Activated T-helper 2 cell treated with anti-CD3 and anti-CD28 coated beads, Interferon-gamma antibody, Interleukin-2, Interleukin-4, amounts not matched to agents 10 μg/mL and 5 μg/mL and 100 μg/mL, durations not matched to agents 14 hours and 24 hours and 36 hours (primary cell): ENCODE measurements at regions of chr1 and their contacts with region 1.

Region 1: DNA sequence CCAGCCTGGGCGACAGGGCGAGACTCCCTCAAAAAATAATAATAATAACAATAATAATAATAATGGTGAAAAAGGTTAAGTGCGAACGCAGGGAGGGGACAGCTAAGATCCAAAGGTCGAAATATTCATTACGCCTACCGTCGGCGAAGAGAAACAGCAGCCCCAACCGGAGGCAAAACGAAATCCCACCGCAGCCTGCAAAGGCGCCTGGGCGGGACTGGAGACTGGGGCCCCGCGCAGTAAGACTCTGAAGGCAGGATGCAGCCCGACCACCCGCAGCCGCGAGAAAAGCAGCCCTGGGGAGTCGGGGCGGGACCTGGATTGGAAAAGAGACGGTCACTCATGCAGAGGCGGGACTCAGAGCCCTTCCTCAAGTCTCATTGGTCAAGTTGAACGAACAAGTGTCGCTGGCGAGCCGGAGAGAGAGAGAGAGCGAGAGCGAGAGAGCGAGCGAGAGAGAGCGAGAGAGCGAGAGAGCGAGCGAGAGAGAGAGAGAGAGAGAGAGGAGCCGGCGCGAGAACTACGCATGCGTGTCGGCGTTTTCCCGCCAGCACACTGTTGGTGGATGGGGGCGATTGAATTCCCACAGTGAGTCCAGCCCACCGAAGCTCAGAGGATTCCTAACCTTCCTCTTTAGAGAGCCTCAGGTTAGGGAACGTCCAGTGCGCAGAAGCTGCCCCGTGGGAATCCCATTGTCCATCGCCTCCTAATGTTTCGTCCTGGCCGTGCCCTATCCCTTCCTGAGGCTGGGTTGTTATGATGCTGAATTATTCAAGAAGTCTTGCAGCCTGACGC is 10.7 kb downstream of the ENTREP3 start:
- DNase-seq: peak; percentile 97
- H3K4me3 Mint-ChIP-seq: peak overlapping the region; percentile 77
- H3K27ac Mint-ChIP-seq: peak overlapping the region; percentile 87
- H3K4me1 Mint-ChIP-seq: peaks cover 32% of the 10 kb centered on the region
- H3K27me3 Mint-ChIP-seq: peaks cover 2% of the 10 kb centered on the region

Region 2: DNA sequence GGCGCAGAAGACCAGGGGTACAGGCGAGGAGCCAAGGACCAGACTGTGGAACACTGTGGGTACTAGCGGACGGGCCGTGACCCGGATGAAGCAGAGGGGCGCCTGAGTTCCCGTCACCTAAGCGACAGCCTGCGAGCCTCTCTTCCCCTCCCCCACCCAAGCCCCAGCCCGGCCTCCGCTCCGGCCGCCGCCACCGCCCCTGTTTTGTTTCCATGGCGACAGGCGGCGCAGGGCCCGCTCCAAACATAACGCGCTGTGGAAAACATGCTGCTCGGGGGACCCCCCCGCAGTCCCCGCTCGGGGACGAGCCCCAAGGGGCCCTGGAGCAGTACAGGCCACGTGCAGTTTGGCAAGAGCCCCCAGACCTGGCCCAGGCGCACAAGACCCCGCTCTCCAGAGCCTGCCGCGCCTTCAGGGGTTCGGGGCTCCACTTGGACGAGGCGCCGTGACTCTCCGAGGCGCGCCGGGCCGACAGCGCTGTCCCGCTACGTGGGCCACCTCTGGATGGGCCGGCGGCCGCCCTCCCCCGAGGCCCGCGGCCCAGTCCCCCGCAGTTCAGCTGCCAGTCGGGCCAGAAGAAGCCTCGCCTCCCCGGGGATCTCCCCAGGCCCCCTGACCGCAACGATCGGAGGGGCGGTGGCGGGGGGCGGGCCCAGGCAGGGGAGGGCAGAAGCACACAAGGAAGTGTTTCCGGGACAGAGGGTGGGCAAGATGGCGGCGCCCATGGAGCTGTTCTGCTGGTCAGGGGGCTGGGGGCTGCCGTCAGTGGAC is 35.8 kb before region 1 on chr1 and contains the start of gene MTX1:
- intact Hi-C with region 1: loop called (anchors 5 kb)
- DNase-seq: peak; percentile 84
- H3K4me3 Mint-ChIP-seq: peak within 1 kb of the TSS; percentile 92
- H3K27ac Mint-ChIP-seq: peak within 1 kb of the TSS; percentile 87
- H3K4me1 Mint-ChIP-seq: peaks cover 24% of the 10 kb centered on the region
- H3K27me3 Mint-ChIP-seq: no peaks in the 10 kb centered on the region
- total RNA-seq, gene MTX1: 58.6 and 64.0 TPM in 2 replicates

Region 3: DNA sequence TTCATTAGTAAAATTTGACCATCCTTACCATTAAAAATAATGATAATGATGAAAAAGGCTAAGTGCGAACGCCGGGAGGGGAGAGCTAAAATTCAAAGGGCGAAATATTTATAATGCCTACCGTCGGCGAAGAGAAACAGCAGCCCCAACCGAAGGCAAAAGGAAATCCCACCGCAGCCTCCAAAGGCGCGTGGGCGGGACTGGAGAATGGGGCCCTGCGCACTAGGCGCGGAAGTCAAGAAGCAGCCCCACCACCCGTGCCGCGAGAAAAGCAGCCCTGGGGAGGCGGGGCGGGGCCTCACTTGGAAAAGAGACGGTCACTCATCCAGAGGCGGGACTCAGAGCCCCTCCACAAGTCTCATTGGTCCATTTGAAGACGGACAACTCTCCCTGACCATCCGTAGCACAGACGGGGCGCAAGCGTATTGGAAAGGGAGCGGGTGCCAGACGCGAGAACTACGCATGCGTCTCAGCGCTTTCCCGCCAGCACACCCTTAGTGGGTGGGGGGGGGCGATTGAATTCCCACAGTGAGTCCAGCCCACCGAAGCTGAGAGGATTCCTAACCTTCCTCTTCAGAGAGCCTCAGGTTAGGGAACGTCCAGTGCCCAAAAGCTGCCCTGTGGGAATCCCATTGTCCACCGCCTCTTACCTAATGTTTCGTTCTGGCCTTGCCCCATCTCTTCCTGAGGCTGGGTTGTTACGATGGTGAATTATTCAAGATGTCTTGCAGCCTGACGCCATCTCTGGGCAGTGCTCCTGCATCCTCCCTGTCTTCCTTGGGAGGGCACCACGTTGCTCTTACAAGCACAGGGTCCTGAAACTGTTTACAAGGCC is 17.1 kb before region 1 on chr1:
- intact Hi-C with region 1: loop called (anchors 1 kb)
- DNase-seq: peak; percentile 99
- H3K4me3 Mint-ChIP-seq: peak overlapping the region; percentile 95
- H3K27ac Mint-ChIP-seq: peak overlapping the region; percentile 94
- H3K4me1 Mint-ChIP-seq: peaks cover 26% of the 10 kb centered on the region
- H3K27me3 Mint-ChIP-seq: no peaks in the 10 kb centered on the region

Region 4: DNA sequence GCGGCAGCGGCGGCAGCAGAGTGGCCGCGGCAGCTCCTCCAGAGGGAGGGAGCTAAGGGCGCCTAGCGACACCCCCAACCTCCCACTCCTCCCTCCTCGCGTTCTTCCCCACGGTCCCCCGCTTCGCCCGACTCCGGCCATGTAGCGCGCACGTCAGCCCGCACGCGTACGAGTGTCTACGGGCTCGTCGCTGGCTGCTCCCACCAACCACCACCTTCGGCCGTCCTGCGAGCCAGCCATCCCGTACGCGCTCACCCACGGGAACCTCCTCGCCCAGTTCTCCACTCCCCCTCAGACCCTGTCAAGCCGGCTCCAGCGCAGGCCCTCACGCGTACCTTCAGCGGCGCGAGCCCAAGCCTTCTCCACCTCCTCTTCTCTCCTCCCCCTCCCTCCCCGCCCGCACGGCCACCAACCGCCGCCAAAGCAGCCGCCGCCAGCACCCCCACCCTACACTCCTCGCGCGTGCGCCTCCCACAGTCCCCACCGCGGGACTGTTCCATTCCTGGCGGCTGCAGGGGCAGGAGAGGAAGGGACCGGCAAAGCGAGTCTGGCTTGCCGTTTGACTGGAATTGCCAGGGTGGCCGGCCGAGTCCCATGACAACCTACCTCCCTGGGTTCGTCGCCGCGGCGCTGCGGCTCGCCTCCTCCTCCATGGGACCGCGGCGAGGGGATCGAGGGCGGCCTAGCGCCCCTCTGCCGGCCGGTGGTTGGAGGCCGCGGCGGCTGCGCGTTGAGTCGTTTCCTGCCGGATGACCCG is 443.9 kb after region 1 on chr1 and contains the start of gene YY1AP1:
- intact Hi-C with region 1: loop called (anchors 5 kb)
- DNase-seq: peak; percentile 89
- H3K4me3 Mint-ChIP-seq: peak within 1 kb of the TSS; percentile 97
- H3K27ac Mint-ChIP-seq: peak within 1 kb of the TSS; percentile 96
- H3K4me1 Mint-ChIP-seq: peaks cover 52% of the 10 kb centered on the region
- H3K27me3 Mint-ChIP-seq: no peaks in the 10 kb centered on the region
- total RNA-seq, gene YY1AP1: 65.8 and 67.9 TPM in 2 replicates